Posterior vena cava (tissue), 2 donors: ENCODE measurements at regions of chr6 and their contacts with region 1.

Region 1: DNA sequence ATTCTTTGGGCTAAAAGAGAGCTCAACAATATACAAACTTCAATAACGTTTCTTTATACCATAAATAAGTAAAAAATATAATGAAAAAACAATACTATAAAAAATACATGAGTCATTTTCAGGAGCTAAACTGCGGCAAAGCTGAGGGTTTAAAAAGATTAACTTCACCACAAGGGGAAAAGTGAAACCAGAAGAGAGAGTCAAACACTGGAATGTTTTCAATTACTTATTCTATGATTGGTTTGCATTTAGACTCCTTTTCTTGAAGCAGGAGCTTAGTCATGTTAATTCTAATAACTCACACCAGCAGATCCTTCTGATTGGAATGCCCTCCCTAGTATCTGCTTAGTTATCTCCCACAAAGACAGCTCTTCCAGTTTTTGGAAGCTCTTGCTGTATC is 627.3 kb downstream of the UTRN start:
- DNase-seq: no peak

Region 2: DNA sequence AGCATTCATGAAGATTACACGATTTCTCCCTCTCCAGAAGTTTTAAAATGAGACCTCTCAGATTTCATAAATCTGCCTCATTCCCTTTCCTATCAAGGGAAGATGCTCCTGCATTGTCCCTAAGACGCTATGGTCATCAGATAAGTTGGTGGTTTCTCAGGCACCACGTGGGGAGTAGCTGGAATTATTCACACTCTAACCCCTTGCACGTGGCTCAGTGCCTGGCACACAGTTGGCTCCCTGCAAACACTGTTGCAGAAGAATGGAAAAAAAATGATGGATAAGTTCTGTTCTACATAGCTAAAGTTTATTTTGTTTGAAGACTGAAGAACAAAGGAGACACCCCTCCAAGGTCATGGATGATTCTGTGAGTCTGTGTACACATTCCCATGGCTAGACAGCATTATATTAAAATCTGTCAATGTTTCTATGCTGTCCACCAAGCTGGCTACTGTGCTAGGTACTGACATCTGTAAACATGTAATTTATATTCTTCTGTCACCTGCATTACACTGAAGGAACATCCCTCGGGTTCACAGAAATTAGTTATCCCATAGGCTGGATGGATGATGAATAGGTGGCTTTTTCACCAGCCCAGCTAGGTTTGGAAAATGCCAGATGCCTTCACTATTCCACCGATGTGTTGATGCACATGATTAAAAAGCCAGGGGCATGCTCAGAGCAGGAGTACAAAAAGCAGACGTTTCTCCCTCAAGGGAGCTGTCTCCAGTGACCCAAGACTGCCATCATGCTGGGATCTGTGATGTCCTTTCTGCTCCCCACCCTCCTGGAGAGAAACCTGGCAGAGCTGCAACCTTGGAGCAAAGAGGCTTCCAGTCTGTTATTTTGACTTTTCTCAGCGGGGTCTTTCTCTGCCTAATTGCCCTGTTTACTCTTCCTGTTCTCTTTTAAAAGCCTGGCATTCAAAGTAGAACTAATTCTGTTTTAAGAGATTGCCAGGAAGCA is 16.9 kb before region 1 on chr6:
- intact Hi-C with region 1: loop called in 1 of 2 experiments (anchors 1 kb)
- DNase-seq: no peak

Region 3: GRCh38 chr6:144931172-144932035 is 18.9 kb after region 1 on chr6:
- intact Hi-C with region 1: loop called in 1 of 2 experiments (anchors 1 kb)
- DNase-seq: no peak

Region 4: DNA sequence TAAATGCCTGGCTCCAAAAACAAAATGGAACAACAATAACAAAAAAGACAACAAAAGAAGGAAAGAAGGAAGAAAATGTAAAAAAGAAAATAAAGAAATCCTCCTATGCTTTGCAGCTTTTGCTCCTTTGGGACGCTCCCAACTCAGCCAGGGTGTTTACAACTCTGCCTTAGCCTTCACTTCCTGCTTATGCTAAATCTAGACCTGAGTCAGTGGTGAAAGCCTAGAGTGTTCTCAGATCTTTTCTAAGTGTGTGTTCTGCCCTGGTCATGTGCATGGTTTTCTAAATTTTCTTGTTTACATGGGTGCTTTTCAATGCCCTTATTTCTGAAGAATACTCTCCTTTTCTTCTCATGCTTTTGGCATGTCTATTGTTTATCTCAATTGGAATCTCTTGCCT is 1096.9 kb after region 1 on chr6:
- intact Hi-C with region 1: no loop called
- DNase-seq: no peak